T-cell (primary cell): ENCODE measurements at regions of chr9 and their contacts with region 1.

Region 1: DNA sequence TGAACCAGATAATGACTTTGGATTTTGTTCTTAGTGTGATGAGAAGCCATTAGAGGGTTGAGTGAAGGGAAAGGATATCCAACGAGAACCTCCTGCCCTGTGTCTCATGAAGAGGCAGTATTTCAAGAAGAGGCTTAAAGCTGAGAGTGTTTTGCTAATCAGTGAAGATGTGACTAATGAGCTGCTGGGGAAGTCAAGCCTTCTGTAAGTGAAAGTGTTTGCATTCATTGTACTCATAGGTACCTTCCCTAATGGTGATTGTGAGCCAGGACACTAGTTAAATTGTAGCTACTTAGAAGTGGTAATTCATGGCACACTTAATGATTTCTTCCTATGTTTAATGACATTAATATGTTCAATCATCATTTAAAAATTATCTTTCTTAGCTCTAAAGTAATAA is 23.7 kb downstream of the PIP5K1B start:
- DNase-seq: no peak
- ATAC-seq: no peak
- H3K4me3 ChIP-seq: no peak overlapping the region
- H3K4me3 Mint-ChIP-seq: no peak overlapping the region
- H3K27ac ChIP-seq: no peak overlapping the region
- H3K27ac Mint-ChIP-seq: no peak overlapping the region
- H3K4me1 ChIP-seq: no peaks in the 10 kb centered on the region
- H3K4me1 Mint-ChIP-seq: no peaks in the 10 kb centered on the region
- H3K27me3 ChIP-seq: peaks cover 0 to 2% of the 10 kb centered on the region in 2 experiments
- H3K27me3 Mint-ChIP-seq: peaks cover 25 to 47% of the 10 kb centered on the region in 2 donors

Region 2: GRCh38 chr9:68455451-68455850 is 273.3 kb before region 1 on chr9:
- CTCF ChIA-PET with region 1: no interaction called
- POLR2A ChIA-PET with region 1: no interaction called
- DNase-seq: no peak
- ATAC-seq: no peak
- H3K4me3 ChIP-seq: no peak overlapping the region
- H3K4me3 Mint-ChIP-seq: no peak overlapping the region
- H3K27ac ChIP-seq: no peak overlapping the region
- H3K27ac Mint-ChIP-seq: no peak overlapping the region
- H3K4me1 ChIP-seq: no peaks in the 10 kb centered on the region
- H3K4me1 Mint-ChIP-seq: no peaks in the 10 kb centered on the region
- H3K27me3 ChIP-seq: no peaks in the 10 kb centered on the region
- H3K27me3 Mint-ChIP-seq: peaks cover 0 to 13% of the 10 kb centered on the region in 2 donors

Region 3: DNA sequence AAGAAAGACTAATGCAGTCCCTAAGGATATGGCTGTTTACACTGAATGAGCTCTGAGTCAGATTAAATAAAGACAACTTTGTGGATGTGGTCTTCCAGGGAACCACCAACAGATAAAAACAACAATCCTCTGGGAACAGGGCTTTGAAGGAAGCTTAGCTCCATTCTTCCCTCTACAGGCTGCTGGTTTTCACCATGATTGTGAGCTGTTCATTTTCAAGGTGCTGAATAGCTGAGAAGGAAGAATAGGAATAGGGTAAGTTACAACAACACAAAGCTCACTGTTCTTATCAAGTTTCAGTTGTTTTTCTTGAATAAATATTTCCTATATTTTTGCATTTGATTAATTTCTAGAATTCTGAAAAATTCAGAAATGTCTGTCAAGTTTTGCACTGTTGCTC is 1057.0 kb after region 1 on chr9:
- CTCF ChIA-PET with region 1: no interaction called
- POLR2A ChIA-PET with region 1: interaction called in 1 of 2 experiments, 11 read pairs
- DNase-seq: no peak
- ATAC-seq: no peak
- H3K4me3 ChIP-seq: no peak overlapping the region
- H3K4me3 Mint-ChIP-seq: no peak overlapping the region
- H3K27ac ChIP-seq: no peak overlapping the region
- H3K27ac Mint-ChIP-seq: no peak overlapping the region
- H3K4me1 ChIP-seq: no peaks in the 10 kb centered on the region
- H3K4me1 Mint-ChIP-seq: no peaks in the 10 kb centered on the region
- H3K27me3 ChIP-seq: no peaks in the 10 kb centered on the region
- H3K27me3 Mint-ChIP-seq: peaks cover 16 to 22% of the 10 kb centered on the region in 2 donors